Activated CD4-positive, alpha-beta T cell treated with anti-CD3 and anti-CD28 coated beads for 36 hours (primary cell): ENCODE measurements at regions of chr2 and their contacts with region 1.

Region 1: GRCh38 chr2:38750891-38751595 is at the start of gene SRSF7:
- DNase-seq: peak; percentile 98
- ATAC-seq: peak; percentile 83
- H3K4me3 Mint-ChIP-seq: peak within 1 kb of the TSS; percentile 94
- H3K27ac Mint-ChIP-seq: peak within 1 kb of the TSS; percentile 100
- H3K4me1 Mint-ChIP-seq: peaks cover 51% of the 10 kb centered on the region
- H3K27me3 Mint-ChIP-seq: no peaks in the 10 kb centered on the region
- total RNA-seq, gene SRSF7: 194 to 309 TPM

Region 2: GRCh38 chr2:37083873-37084794 is 1666.9 kb before region 1 on chr2 and contains the starts of genes GPATCH11 and HEATR5B:
- CTCF ChIA-PET with region 1: no interaction called
- POLR2A ChIA-PET with region 1: no interaction called
- intact Hi-C with region 1: loop called in 1 of 2 experiments (anchors 2 kb)
- DNase-seq: peak; percentile 94
- ATAC-seq: peak; percentile 89
- H3K4me3 Mint-ChIP-seq: no peak within 1 kb of the TSS
- H3K27ac Mint-ChIP-seq: no peak within 1 kb of the TSS
- H3K4me1 Mint-ChIP-seq: peaks cover 44% of the 10 kb centered on the region
- H3K27me3 Mint-ChIP-seq: no peaks in the 10 kb centered on the region
- total RNA-seq, gene GPATCH11: 9.6 to 10.0 TPM
- total RNA-seq, gene HEATR5B: 15.2 TPM

Region 3: GRCh38 chr2:38438883-38439612 is 312.0 kb before region 1 on chr2:
- CTCF ChIA-PET with region 1: no interaction called
- POLR2A ChIA-PET with region 1: no interaction called
- intact Hi-C with region 1: no loop called
- DNase-seq: peak; percentile 18
- ATAC-seq: peak; percentile 36
- H3K4me3 Mint-ChIP-seq: no peak overlapping the region
- H3K27ac Mint-ChIP-seq: peak overlapping the region; percentile 22
- H3K4me1 Mint-ChIP-seq: peaks cover 7% of the 10 kb centered on the region
- H3K27me3 Mint-ChIP-seq: peaks cover 4% of the 10 kb centered on the region

Region 4: GRCh38 chr2:38602732-38603401 is 148.2 kb before region 1 on chr2 and contains the start of gene HNRNPLL:
- CTCF ChIA-PET with region 1: interaction called, 11 read pairs
- POLR2A ChIA-PET with region 1: interaction called, 19 read pairs
- intact Hi-C with region 1: loop called (anchors 1 to 2 kb)
- DNase-seq: peak; percentile 99
- ATAC-seq: peak; percentile 87
- H3K4me3 Mint-ChIP-seq: peak within 1 kb of the TSS; percentile 76
- H3K27ac Mint-ChIP-seq: peak within 1 kb of the TSS; percentile 94
- H3K4me1 Mint-ChIP-seq: peaks cover 48% of the 10 kb centered on the region
- H3K27me3 Mint-ChIP-seq: no peaks in the 10 kb centered on the region
- total RNA-seq, gene HNRNPLL: 53.5 to 59.8 TPM

Region 5: GRCh38 chr2:38665854-38666555 is 85.0 kb before region 1 on chr2 and contains the start of gene GALM:
- CTCF ChIA-PET with region 1: interaction called, 5 read pairs
- POLR2A ChIA-PET with region 1: interaction called, 17 read pairs
- intact Hi-C with region 1: loop called in 1 of 2 experiments (anchors 1 kb)
- DNase-seq: peak; percentile 77
- ATAC-seq: peak; percentile 32
- H3K4me3 Mint-ChIP-seq: peak within 1 kb of the TSS; percentile 89
- H3K27ac Mint-ChIP-seq: peak within 1 kb of the TSS; percentile 99
- H3K4me1 Mint-ChIP-seq: peaks cover 67% of the 10 kb centered on the region
- H3K27me3 Mint-ChIP-seq: no peaks in the 10 kb centered on the region
- total RNA-seq, gene GALM: 56.0 to 57.8 TPM

Region 6: GRCh38 chr2:38720613-38721241 is 30.3 kb before region 1 on chr2:
- CTCF ChIA-PET with region 1: interaction called, 10 read pairs
- POLR2A ChIA-PET with region 1: interaction called, 12 read pairs
- intact Hi-C with region 1: no loop called
- DNase-seq: no peak
- ATAC-seq: no peak
- H3K4me3 Mint-ChIP-seq: peak overlapping the region; percentile 27
- H3K27ac Mint-ChIP-seq: peak overlapping the region; percentile 78
- H3K4me1 Mint-ChIP-seq: peaks cover 75% of the 10 kb centered on the region
- H3K27me3 Mint-ChIP-seq: no peaks in the 10 kb centered on the region

Region 7: GRCh38 chr2:38763228-38763627 is 12.2 kb after region 1 on chr2:
- CTCF ChIA-PET with region 1: interaction called, 7 read pairs
- POLR2A ChIA-PET with region 1: interaction called, 14 read pairs
- intact Hi-C with region 1: no loop called
- DNase-seq: no peak
- ATAC-seq: peak; percentile 65
- H3K4me3 Mint-ChIP-seq: no peak overlapping the region
- H3K27ac Mint-ChIP-seq: no peak overlapping the region
- H3K4me1 Mint-ChIP-seq: peaks cover 2% of the 10 kb centered on the region
- H3K27me3 Mint-ChIP-seq: no peaks in the 10 kb centered on the region

Region 8: GRCh38 chr2:38948995-38949394 is 198.0 kb after region 1 on chr2:
- CTCF ChIA-PET with region 1: no interaction called
- POLR2A ChIA-PET with region 1: no interaction called
- intact Hi-C with region 1: no loop called
- DNase-seq: no peak
- ATAC-seq: no peak
- H3K4me3 Mint-ChIP-seq: no peak overlapping the region
- H3K27ac Mint-ChIP-seq: no peak overlapping the region
- H3K4me1 Mint-ChIP-seq: no peaks in the 10 kb centered on the region
- H3K27me3 Mint-ChIP-seq: no peaks in the 10 kb centered on the region

Region 9: GRCh38 chr2:39008665-39009064 is 257.6 kb after region 1 on chr2:
- CTCF ChIA-PET with region 1: no interaction called
- POLR2A ChIA-PET with region 1: no interaction called
- intact Hi-C with region 1: no loop called
- DNase-seq: peak; percentile 49
- ATAC-seq: peak; percentile 91
- H3K4me3 Mint-ChIP-seq: no peak overlapping the region
- H3K27ac Mint-ChIP-seq: peak overlapping the region; percentile 37
- H3K4me1 Mint-ChIP-seq: peaks cover 13% of the 10 kb centered on the region
- H3K27me3 Mint-ChIP-seq: no peaks in the 10 kb centered on the region

Region 10: GRCh38 chr2:39227628-39228412 is 476.8 kb after region 1 on chr2:
- CTCF ChIA-PET with region 1: no interaction called
- POLR2A ChIA-PET with region 1: no interaction called
- intact Hi-C with region 1: loop called in 1 of 2 experiments (anchors 10 kb)
- DNase-seq: peak; percentile 91
- ATAC-seq: peak; percentile 83
- H3K4me3 Mint-ChIP-seq: peak overlapping the region; percentile 49
- H3K27ac Mint-ChIP-seq: peak overlapping the region; percentile 40
- H3K4me1 Mint-ChIP-seq: peaks cover 32% of the 10 kb centered on the region
- H3K27me3 Mint-ChIP-seq: peaks cover 6% of the 10 kb centered on the region

Region 11: GRCh38 chr2:39275016-39275415 is 524.0 kb after region 1 on chr2:
- CTCF ChIA-PET with region 1: no interaction called
- POLR2A ChIA-PET with region 1: no interaction called
- intact Hi-C with region 1: no loop called
- DNase-seq: no peak
- ATAC-seq: no peak
- H3K4me3 Mint-ChIP-seq: no peak overlapping the region
- H3K27ac Mint-ChIP-seq: no peak overlapping the region
- H3K4me1 Mint-ChIP-seq: no peaks in the 10 kb centered on the region
- H3K27me3 Mint-ChIP-seq: no peaks in the 10 kb centered on the region